Right cardiac atrium (tissue), 5 donors: ENCODE measurements at regions of chr17 and their contacts with region 1.

Region 1: GRCh38 chr17:78112518-78113226 is 15.9 kb downstream of the TMC6 start:
- DNase-seq: peak; percentile 80 to 92 (median 92)
- ATAC-seq: peak; percentile 61 to 80
- H3K4me3 ChIP-seq: no peak overlapping the region
- H3K27ac ChIP-seq: no peak overlapping the region
- H3K4me1 ChIP-seq: no peaks in the 10 kb centered on the region
- H3K27me3 ChIP-seq: no peaks in the 10 kb centered on the region

Region 2: GRCh38 chr17:77974396-77974795 is 138.3 kb before region 1 on chr17:
- intact Hi-C with region 1: no loop called
- DNase-seq: no peak
- ATAC-seq: no peak
- H3K4me3 ChIP-seq: no peak overlapping the region
- H3K27ac ChIP-seq: no peak overlapping the region
- H3K4me1 ChIP-seq: peaks cover 9% of the 10 kb centered on the region
- H3K27me3 ChIP-seq: no peaks in the 10 kb centered on the region

Region 3: GRCh38 chr17:78250891-78251794 is 138.5 kb after region 1 on chr17:
- intact Hi-C with region 1: loop called in 2 of 4 experiments (anchors 5 kb)
- DNase-seq: peak; percentile 85 to 94 (median 93)
- ATAC-seq: peak; percentile 74 to 80
- H3K4me3 ChIP-seq: no peak overlapping the region
- H3K27ac ChIP-seq: no peak overlapping the region
- H3K4me1 ChIP-seq: peaks cover under 1% of the 10 kb centered on the region
- H3K27me3 ChIP-seq: no peaks in the 10 kb centered on the region

Region 4: DNA sequence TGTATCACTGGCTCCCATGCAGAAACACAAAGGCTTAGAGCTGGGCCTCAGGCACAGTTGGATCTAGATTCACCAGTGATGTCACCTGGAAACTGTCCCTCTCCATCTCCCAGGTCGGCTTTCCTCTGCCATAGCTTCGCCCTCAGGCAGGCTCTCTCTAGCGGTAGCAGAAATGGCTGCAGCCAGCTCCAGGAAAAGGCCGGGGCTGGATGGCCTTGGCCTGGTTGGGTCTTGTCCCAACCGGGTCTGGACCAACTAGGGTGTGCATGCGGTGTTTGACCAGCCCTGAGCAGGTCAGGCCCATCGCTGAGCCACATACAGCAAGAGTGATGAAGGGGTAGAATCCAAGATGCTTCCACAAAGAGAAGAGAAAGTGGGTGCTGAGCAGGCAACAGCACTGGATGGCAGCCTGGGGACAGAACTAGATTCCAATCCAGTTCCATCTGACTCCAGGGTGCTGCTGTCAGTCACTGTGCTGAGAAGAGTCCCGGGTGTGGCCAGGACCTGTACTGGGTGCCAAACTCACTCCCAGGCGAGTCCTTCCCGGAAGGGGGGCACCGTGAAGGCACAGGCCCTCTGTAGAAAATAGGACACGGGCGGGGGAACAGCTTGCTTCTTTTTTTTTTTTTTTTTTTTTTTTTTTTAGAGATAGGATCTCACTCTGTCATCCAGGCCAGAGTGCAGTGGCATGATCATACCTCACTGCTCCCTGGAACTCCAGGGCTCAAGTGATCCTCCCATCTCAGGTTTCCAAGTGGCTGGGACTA is 195.4 kb after region 1 on chr17:
- intact Hi-C with region 1: no loop called
- DNase-seq: no peak
- ATAC-seq: no peak
- H3K4me3 ChIP-seq: no peak overlapping the region
- H3K27ac ChIP-seq: no peak overlapping the region
- H3K4me1 ChIP-seq: no peaks in the 10 kb centered on the region
- H3K27me3 ChIP-seq: no peaks in the 10 kb centered on the region